Psoas muscle (tissue), 8 donors: ENCODE measurements at regions of chr3 and their contacts with region 1.

Region 1: GRCh38 chr3:56939834-56940233 is 120.6 kb upstream of the SPATA12 start:
- DNase-seq: no peak
- ATAC-seq: no peak
- H3K4me3 ChIP-seq: no peak overlapping the region
- H3K27ac ChIP-seq: no peak overlapping the region
- H3K4me1 ChIP-seq: no peaks in the 10 kb centered on the region
- H3K27me3 ChIP-seq: no peaks in the 10 kb centered on the region
- CTCF ChIP-seq: no peak

Region 2: DNA sequence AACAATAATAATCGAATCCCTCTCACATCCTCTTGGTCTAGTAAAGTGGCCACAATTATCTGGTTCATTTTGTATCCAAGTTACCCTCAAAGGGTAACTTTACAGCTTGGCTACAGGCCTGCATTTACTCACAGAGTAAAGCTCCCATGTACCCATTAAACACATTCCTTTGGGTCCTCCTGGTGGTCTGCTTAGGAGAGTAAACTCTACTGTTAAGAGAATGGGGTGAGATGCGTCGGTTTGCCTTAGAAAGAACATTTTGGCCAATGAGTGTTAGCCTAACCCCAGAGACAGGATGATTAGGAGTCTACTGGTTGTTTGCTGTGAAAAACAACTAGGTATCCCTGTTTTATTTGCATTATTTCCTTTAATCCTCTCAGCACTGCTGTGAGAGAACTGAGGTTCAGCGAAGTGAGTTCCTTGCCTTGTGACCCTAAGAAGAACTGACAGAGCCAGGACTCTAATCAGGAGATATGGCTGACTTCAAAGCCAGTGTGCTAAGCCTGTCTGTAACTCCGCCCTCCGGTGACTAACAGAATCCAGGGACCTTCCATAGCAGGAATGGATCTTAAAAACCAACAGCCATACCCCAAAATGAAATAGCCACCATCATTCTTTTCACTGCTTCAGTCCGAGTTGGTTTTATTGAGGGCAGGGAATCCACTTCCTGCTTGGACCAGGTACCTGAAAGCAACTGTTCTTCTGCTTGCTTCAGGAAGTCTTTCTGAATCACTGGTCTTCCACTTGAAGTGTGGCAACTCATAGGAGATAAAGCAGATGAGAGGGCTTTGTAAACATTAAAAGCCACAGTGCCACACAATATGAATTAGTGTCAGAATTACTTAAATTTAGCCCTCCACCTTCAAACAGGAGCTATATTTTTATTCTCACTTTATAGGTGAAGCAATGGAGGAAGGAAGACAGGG is 1135.4 kb before region 1 on chr3:
- intact Hi-C with region 1: loop called in 1 of 2 experiments (anchors 5 kb)
- DNase-seq: no peak
- ATAC-seq: no peak
- H3K4me3 ChIP-seq: no peak overlapping the region
- H3K27ac ChIP-seq: no peak overlapping the region
- H3K4me1 ChIP-seq: no peaks in the 10 kb centered on the region
- H3K27me3 ChIP-seq: peaks cover 0 to 3% (median 0%) of the 10 kb centered on the region in 3 donors
- CTCF ChIP-seq: no peak